K562 (cell line): ENCODE measurements at regions of chr15 and their contacts with region 1.

Region 1: DNA sequence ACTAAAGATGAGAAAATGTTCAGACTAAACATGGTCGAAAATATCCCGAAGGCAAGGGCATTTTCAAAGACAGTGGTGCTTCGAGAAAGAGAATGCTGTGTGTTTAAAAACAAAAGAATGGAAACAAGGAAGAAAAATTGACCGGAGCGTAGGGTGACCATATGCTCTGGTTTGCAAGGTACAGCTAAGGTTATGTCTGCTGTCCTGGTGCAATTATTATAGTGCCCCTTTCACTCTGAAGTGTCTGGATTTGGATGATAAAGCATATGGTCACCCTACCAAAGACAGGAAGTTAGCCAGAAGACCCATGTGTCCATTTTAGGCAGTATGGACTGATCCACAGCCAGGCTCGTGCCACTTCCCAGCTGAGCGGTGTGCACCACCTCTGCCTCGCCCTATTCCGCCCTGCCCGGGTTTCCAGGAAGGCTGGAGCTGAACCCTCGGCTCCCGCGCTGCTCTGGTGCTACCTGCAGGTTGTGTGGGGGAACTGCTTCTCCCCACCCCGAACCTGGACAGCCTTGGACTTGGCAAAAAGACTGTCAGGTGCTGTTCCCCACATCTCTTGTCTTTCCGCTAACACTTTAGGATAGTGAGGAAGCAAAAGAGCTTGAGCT is 25.2 kb downstream of the GOLGA6D start:
- DNase-seq: peak; percentile 68 to 78 (median 73)
- ATAC-seq: peak; percentile 99
- H3K4me3 ChIP-seq: no peak overlapping the region
- H3K27ac ChIP-seq: no peak overlapping the region
- H3K4me1 ChIP-seq: peaks cover 0 to 4% of the 10 kb centered on the region in 2 experiments; a peak in 2 of 5 replicates
- H3K27me3 ChIP-seq: peaks cover 8 to 20% of the 10 kb centered on the region in 2 experiments
- CTCF ChIP-seq: peak; percentile 75 to 78 (median 78)
- EP300 ChIP-seq: no peak
- POLR2A ChIP-seq: no peak
- RAD21 ChIP-seq: peak; percentile 61 to 87

Region 2: DNA sequence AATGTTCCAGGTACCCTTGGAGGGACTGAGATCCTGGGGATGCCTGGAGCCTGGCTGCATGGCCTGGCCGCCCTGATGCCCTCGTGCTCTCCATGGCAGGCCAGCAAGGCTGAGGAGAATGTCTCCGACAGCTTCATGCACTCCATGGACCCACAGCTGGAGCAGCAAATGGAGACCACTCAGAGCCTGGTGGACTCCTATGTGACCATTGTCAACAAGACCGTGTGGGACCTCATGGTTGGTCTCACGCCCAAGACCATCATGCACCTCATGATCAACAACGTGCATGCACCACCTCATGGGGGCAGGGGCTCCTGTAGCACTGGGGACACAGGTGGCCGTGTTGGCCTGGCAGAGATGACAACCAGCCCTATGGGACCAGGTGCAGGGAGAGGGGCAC is 1245.2 kb before region 1 on chr15:
- CTCF ChIA-PET with region 1: no interaction called
- POLR2A ChIA-PET with region 1: no interaction called
- in situ Hi-C with region 1: loop called (anchors 10 kb)
- intact Hi-C with region 1: no loop called
- DNase-seq: no peak
- ATAC-seq: no peak
- H3K4me3 ChIP-seq: no peak overlapping the region
- H3K27ac ChIP-seq: no peak overlapping the region
- H3K4me1 ChIP-seq: no peaks in the 10 kb centered on the region
- H3K27me3 ChIP-seq: peaks cover 0 to 8% of the 10 kb centered on the region in 2 experiments; a peak in 2 of 5 replicates
- CTCF ChIP-seq: no peak
- EP300 ChIP-seq: no peak
- POLR2A ChIP-seq: no peak
- RAD21 ChIP-seq: no peak

Region 3: GRCh38 chr15:75029378-75030022 is 278.4 kb before region 1 on chr15:
- CTCF ChIA-PET with region 1: interaction called, 3 read pairs
- POLR2A ChIA-PET with region 1: no interaction called
- in situ Hi-C with region 1: loop called (anchors 5 kb)
- intact Hi-C with region 1: no loop called
- DNase-seq: peak; percentile 81 to 94 (median 84)
- ATAC-seq: peak; percentile 95
- H3K4me3 ChIP-seq: no peak overlapping the region
- H3K27ac ChIP-seq: no peak overlapping the region; the same call in 2 of the 3 replicates
- H3K4me1 ChIP-seq: peaks cover 22 to 25% of the 10 kb centered on the region in 2 experiments
- H3K27me3 ChIP-seq: no peaks in the 10 kb centered on the region
- CTCF ChIP-seq: peak; percentile 94 to 97 (median 95)
- EP300 ChIP-seq: peak; percentile 33; the same call in 1 of the 2 replicates
- POLR2A ChIP-seq: no peak
- RAD21 ChIP-seq: peak; percentile 98

Region 4: DNA sequence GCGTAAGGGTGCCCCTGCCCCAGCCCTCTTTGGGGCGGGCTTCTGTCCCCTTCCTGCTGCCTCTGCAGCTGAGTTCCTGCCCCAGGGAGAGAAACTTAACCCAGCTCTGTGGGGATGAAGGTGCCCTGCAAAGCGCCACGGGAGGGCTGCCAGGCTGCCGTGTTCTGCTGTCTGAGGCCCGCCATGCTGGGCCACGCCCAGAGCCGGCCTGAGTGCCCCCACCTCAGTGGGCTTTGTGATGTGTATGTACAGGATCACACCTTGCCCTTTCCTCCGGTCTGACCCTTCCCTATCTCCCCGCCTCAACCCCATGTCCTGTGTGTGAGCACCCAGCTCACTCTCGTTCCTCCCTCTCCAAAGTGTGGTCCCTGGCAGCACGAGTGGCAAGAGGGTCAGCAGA is 83.6 kb before region 1 on chr15:
- CTCF ChIA-PET with region 1: no interaction called
- POLR2A ChIA-PET with region 1: no interaction called
- in situ Hi-C with region 1: loop called (anchors 5 kb)
- intact Hi-C with region 1: no loop called
- DNase-seq: no peak
- ATAC-seq: no peak
- H3K4me3 ChIP-seq: no peak overlapping the region
- H3K27ac ChIP-seq: no peak overlapping the region
- H3K4me1 ChIP-seq: peaks cover 0 to 10% of the 10 kb centered on the region in 2 experiments; a peak in 2 of 5 replicates
- H3K27me3 ChIP-seq: peaks cover 26 to 58% of the 10 kb centered on the region in 2 experiments
- CTCF ChIP-seq: no peak
- EP300 ChIP-seq: no peak
- POLR2A ChIP-seq: no peak
- RAD21 ChIP-seq: no peak

Region 5: GRCh38 chr15:75928680-75929608 is 621.1 kb after region 1 on chr15:
- CTCF ChIA-PET with region 1: no interaction called
- POLR2A ChIA-PET with region 1: no interaction called
- in situ Hi-C with region 1: loop called (anchors 10 kb)
- intact Hi-C with region 1: no loop called
- DNase-seq: peak; percentile 28 to 70 (median 38)
- ATAC-seq: peak; percentile 95
- H3K4me3 ChIP-seq: no peak overlapping the region
- H3K27ac ChIP-seq: no peak overlapping the region
- H3K4me1 ChIP-seq: peaks cover 0 to 15% of the 10 kb centered on the region in 2 experiments; a peak in 2 of 5 replicates
- H3K27me3 ChIP-seq: no peaks in the 10 kb centered on the region
- CTCF ChIP-seq: peak; percentile 70 to 75 (median 73)
- EP300 ChIP-seq: no peak
- POLR2A ChIP-seq: no peak
- RAD21 ChIP-seq: peak; percentile 41 to 65